IMR-90 (cell line): ENCODE measurements at regions of chr18 and their contacts with region 1.

Region 1: DNA sequence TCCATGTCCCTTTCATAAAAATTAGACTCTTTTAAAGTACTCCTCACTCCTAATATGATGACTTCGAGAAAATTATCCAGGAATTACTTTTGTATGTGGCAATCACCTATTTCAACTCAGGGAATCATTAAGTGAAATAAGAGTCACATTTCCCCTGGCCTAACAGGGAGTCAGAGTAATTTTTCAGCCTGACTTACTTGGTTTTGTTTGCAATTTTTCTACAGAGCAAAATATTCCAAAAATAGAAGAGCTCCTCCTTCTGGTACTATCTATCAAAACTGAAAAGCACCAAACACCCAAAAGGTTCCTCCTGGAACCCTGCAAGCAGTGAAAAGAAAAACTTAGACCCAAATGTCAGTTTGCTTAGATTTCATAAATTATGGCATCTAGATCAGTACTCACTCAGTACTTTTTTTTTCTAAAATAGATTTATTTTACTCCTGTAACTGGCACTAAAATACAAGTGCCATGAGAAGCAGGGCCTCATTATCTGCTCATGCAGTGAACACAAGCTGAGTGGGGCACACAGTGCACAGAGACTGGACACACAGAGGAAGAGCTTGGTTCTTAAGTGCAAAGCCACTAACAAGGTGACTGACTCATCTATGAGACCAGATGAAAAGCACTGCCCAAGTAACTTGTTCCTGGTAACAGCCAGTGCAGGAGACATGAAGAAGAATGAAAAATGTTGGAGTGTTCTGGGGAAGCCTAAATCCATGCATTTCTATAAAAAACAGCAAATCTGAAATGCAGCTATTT is 28.7 kb downstream of the ACAA2 start:
- DNase-seq: peak; percentile 18
- ATAC-seq: no peak
- H3K4me3 ChIP-seq: no peak overlapping the region
- H3K27ac ChIP-seq: no peak overlapping the region
- H3K4me1 ChIP-seq: no peaks in the 10 kb centered on the region; the same call in 1 of the 2 replicates
- H3K27me3 ChIP-seq: no peaks in the 10 kb centered on the region
- CTCF ChIP-seq: 0 out of 2 replicates have a peak, but pooled peaks have one; percentile 21
- POLR2A ChIP-seq: no peak
- RAD21 ChIP-seq: no peak

Region 2: DNA sequence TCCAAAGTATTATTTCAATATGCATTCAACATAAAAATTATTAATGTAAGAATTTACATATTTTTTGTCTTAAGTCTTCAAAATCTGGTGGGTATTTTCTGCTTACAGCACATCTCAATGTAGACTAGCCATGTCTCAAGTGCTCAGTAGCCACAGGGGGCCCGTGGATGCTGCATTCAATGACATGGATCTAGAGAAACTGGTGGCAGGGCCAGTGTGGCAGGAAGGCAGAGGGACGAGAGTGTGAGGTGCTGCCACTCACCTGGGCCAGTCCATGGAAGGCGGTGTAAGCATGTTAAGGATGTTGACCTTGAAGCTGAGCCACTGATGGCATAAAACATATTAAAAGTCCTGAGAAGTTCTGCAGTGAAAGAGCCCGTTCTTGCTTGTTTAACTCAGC is 229.0 kb before region 1 on chr18:
- CTCF ChIA-PET with region 1: no interaction called
- POLR2A ChIA-PET with region 1: no interaction called
- dilution Hi-C with region 1: no loop called
- in situ Hi-C with region 1: no loop called
- intact Hi-C with region 1: loop called (anchors 2 kb)
- DNase-seq: no peak
- ATAC-seq: no peak
- H3K4me3 ChIP-seq: no peak overlapping the region
- H3K27ac ChIP-seq: no peak overlapping the region
- H3K4me1 ChIP-seq: no peaks in the 10 kb centered on the region
- H3K27me3 ChIP-seq: peaks cover 37% of the 10 kb centered on the region
- CTCF ChIP-seq: no peak
- POLR2A ChIP-seq: no peak
- RAD21 ChIP-seq: no peak

Region 3: DNA sequence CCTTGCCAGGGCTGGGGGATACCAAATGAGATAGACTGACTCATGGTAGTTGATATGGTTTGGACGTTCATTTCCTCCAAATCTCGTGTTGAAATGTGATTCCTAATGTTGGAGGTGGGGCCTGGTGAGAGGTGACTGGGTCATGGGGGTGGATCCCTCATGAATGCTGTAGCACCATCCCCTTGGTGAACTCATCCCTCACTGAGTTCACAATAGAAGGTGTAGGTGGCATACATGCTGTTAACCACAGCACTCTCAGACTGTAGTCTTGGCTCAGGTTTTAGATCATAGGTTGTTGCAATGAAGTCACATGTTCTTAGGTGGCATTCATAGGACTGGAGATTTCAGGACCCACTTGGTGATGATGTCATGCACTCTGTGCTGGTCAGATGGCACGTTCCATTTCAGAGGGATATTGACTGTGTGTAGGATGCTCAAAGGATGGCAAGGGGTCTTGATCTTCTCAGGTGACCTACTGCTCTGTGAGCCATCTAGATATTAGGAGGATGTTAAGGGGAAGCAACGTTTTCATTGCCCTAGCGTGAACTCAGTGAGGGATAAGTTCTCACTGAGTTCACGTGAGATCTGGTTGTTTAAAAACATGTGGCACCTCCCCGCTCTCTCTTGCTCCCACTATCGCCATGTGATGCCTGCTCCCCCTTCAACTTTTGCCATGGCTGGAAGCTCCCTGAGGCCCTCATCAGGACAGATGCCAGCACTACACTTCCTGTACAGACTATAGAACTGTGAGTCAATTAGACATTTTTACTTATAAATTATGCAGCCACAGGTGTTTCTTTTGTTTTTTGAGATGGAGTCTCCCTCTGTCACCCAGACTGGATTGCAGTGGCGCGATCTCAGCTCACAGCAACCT is 102.5 kb after region 1 on chr18:
- CTCF ChIA-PET with region 1: no interaction called
- POLR2A ChIA-PET with region 1: no interaction called
- dilution Hi-C with region 1: no loop called
- in situ Hi-C with region 1: no loop called
- intact Hi-C with region 1: no loop called
- DNase-seq: no peak
- ATAC-seq: no peak
- H3K4me3 ChIP-seq: no peak overlapping the region
- H3K27ac ChIP-seq: no peak overlapping the region
- H3K4me1 ChIP-seq: no peaks in the 10 kb centered on the region
- H3K27me3 ChIP-seq: peaks cover 1% of the 10 kb centered on the region
- CTCF ChIP-seq: no peak
- POLR2A ChIP-seq: no peak
- RAD21 ChIP-seq: no peak